ENCODE measurements at regions of chr11 and their contacts with region 1.

Region 1: GRCh38 chr11:6612213-6613041 is at the start of gene TAF10:
- DNase-seq: peak; percentile 95 to 96 (median 95)
- H3K4me3 ChIP-seq: peak within 1 kb of the TSS; percentile 69 to 87 (median 76)
- H3K4me3 Mint-ChIP-seq: peak within 1 kb of the TSS; percentile 86 to 93
- H3K27ac ChIP-seq: peak within 1 kb of the TSS; percentile 93 to 99
- H3K27ac Mint-ChIP-seq: peak within 1 kb of the TSS in 6 of 7 donors; percentile 90 to 96 (median 95)
- H3K4me1 ChIP-seq: peaks cover 45 to 56% of the 10 kb centered on the region in 2 donors
- H3K4me1 Mint-ChIP-seq: peaks cover 33% of the 10 kb centered on the region
- H3K27me3 ChIP-seq: no peaks in the 10 kb centered on the region
- H3K27me3 Mint-ChIP-seq: no peaks in the 10 kb centered on the region
- CTCF ChIP-seq: peak; percentile 46
- polyA plus RNA-seq, gene TAF10: 137 to 233 (median 232) TPM

Region 2: DNA sequence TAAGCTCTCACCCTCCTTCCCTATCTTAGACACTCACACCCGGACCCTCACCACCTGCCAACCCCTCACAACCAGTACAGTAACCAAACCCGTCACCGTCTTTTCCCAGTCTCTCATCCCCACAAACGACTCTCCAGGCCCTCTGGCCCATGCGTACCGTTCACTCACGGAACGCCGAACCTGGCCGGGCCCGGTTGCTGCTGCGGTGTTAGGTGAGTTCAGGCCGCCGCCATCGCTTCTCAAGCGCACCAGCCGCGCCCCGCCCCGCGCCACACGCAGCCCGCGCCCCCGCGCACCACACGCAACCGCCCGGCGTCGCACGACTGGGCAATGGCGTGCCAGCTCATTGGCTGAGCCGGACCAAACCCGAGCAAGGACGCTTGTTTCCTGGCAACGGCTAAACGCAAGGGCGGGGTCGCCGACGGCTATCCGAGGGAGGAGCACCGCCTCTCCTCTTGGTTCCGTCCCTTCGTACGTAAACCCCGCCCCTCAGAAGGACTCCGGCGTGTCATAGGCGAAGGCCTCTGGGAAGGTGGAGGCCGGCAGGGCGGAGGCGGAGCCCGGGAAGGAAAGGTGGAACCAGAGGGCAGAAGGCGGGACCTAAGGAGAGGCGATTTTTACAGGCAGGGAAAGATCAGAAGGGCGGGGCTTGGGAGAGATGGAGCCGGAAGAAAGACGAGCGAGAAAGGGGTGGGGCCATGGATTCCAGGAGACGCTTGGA is 377.9 kb before region 1 on chr11 and contains the start of gene FHIP1B:
- intact Hi-C with region 1: loop called (anchors 5 to 10 kb)
- DNase-seq: peak; percentile 99 to 100 (median 100)
- H3K4me3 ChIP-seq: peak within 1 kb of the TSS; percentile 81 to 94 (median 87)
- H3K4me3 Mint-ChIP-seq: peak within 1 kb of the TSS; percentile 97 to 100
- H3K27ac ChIP-seq: peak within 1 kb of the TSS; percentile 84 to 97
- H3K27ac Mint-ChIP-seq: peak within 1 kb of the TSS; percentile 98 to 100 (median 98)
- H3K4me1 ChIP-seq: peaks cover 49 to 72% of the 10 kb centered on the region in 2 donors
- H3K4me1 Mint-ChIP-seq: peaks cover 48% of the 10 kb centered on the region
- H3K27me3 ChIP-seq: no peaks in the 10 kb centered on the region
- H3K27me3 Mint-ChIP-seq: peaks cover 0 to 1% (median 0%) of the 10 kb centered on the region in 3 donors
- CTCF ChIP-seq: no peak
- polyA plus RNA-seq, gene FHIP1B: 14.2 to 64.1 (median 18.9) TPM

Region 3: DNA sequence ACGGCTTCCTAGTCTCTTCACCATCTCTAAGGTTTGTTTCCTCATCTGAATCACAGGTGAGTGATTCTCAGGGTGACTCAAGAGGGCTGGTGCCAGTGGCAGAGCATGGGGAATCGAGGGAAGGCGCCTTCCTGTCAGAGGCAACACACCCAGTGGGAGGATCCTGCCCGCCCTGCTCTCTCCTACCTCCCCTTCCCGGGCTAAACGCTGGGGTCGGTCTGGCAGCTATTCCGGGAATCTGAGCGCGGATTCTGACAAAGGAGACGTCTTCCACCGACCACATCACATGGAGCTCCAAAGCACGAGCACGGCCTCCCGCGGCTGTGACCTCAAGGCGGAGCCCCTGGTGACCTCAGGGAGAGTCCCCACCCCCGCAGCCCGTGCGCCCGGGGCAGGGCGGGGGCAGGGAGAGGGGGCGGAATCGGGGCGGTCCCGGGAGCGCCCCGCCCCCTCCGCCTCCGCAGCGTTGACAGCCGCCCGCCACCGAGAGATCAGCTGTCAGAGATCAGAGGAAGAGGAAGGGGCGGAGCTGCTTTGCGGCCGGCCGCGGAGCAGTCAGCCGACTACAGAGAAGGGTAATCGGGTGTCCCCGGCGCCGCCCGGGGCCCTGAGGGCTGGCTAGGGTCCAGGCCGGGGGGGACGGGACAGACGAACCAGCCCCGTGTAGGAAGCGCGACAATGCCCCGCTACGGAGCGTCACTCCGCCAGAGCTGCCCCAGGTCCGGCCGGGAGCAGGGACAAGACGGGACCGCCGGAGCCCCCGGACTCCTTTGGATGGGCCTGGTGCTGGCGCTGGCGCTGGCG is 222.3 kb before region 1 on chr11 and contains the start of gene SMPD1:
- intact Hi-C with region 1: loop called in 1 of 2 experiments (anchors 5 kb)
- DNase-seq: peak; percentile 92 to 94 (median 93)
- H3K4me3 ChIP-seq: peak within 1 kb of the TSS; percentile 62 to 91 (median 70)
- H3K4me3 Mint-ChIP-seq: peak within 1 kb of the TSS; percentile 87 to 97
- H3K27ac ChIP-seq: peak within 1 kb of the TSS; percentile 76 to 93
- H3K27ac Mint-ChIP-seq: peak within 1 kb of the TSS; percentile 94 to 99 (median 97)
- H3K4me1 ChIP-seq: peaks cover 15 to 19% of the 10 kb centered on the region in 2 donors
- H3K4me1 Mint-ChIP-seq: peaks cover 34% of the 10 kb centered on the region
- H3K27me3 ChIP-seq: no peaks in the 10 kb centered on the region
- H3K27me3 Mint-ChIP-seq: peaks cover 0 to 2% (median 0%) of the 10 kb centered on the region in 3 donors
- CTCF ChIP-seq: no peak
- polyA plus RNA-seq, gene SMPD1: 4.2 to 22.6 (median 4.9) TPM

Region 4: GRCh38 chr11:6481012-6481923 is 131.2 kb before region 1 on chr11 and contains the starts of genes ARFIP2 and TIMM10B:
- intact Hi-C with region 1: loop called (anchors 5 to 10 kb)
- DNase-seq: peak; percentile 99 to 100 (median 99)
- H3K4me3 ChIP-seq: peak within 1 kb of the TSS; percentile 56 to 78 (median 64)
- H3K4me3 Mint-ChIP-seq: peak within 1 kb of the TSS; percentile 82 to 91
- H3K27ac ChIP-seq: peak within 1 kb of the TSS; percentile 97 to 98
- H3K27ac Mint-ChIP-seq: peak within 1 kb of the TSS; percentile 96 to 99 (median 98)
- H3K4me1 ChIP-seq: peaks cover 22 to 25% of the 10 kb centered on the region in 2 donors
- H3K4me1 Mint-ChIP-seq: peaks cover 31% of the 10 kb centered on the region
- H3K27me3 ChIP-seq: no peaks in the 10 kb centered on the region
- H3K27me3 Mint-ChIP-seq: peaks cover 0 to 2% (median 0%) of the 10 kb centered on the region in 3 donors
- CTCF ChIP-seq: no peak
- polyA plus RNA-seq, gene ARFIP2: 21.6 to 43.8 (median 27.2) TPM
- polyA plus RNA-seq, gene TIMM10B: 20.0 to 34.9 (median 22.1) TPM

Region 5: DNA sequence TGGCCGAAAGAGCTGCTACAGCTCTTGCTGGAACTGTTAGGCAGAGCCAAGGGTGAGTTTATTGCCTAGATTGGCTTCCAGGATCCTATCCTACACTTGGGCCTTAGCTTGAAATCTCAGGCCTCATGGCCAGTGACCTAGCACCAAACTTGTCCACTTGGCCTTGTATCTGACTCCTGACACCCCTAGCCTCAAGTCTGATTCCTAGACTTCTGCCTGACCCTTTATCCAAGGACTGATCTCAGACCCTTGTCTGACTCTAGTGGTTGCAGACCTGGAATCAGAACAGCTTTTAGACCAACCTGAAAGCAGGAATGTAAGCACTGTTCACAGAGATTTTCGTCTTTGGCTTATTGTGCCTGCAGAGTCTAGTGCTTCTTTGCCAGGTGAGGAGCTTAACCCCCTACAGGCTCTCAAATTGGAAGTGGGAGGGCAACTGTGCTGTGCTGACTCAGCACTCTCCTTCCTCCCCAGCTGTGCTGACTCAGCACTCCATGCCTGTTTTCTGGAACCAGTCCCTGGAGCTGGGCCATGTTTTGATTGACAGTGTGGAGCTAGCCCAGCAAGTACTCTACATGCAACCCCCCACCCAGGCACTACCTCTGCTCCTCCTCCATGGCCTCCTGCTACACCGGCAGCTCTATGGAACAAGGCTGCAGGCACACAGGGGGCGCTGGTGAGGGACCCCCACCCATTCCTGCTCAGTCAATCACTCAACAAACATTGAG is 44.1 kb before region 1 on chr11:
- intact Hi-C with region 1: no loop called
- DNase-seq: no peak
- H3K4me3 ChIP-seq: no peak overlapping the region
- H3K4me3 Mint-ChIP-seq: no peak overlapping the region
- H3K27ac ChIP-seq: no peak overlapping the region
- H3K27ac Mint-ChIP-seq: peak overlapping the region in 4 of 7 donors; percentile 1 to 73 (median 35)
- H3K4me1 ChIP-seq: no peaks in the 10 kb centered on the region
- H3K4me1 Mint-ChIP-seq: peaks cover 8% of the 10 kb centered on the region
- H3K27me3 ChIP-seq: peaks cover 0 to 4% of the 10 kb centered on the region in 2 donors
- H3K27me3 Mint-ChIP-seq: peaks cover 0 to 13% (median 10%) of the 10 kb centered on the region in 3 donors
- CTCF ChIP-seq: no peak

Region 6: DNA sequence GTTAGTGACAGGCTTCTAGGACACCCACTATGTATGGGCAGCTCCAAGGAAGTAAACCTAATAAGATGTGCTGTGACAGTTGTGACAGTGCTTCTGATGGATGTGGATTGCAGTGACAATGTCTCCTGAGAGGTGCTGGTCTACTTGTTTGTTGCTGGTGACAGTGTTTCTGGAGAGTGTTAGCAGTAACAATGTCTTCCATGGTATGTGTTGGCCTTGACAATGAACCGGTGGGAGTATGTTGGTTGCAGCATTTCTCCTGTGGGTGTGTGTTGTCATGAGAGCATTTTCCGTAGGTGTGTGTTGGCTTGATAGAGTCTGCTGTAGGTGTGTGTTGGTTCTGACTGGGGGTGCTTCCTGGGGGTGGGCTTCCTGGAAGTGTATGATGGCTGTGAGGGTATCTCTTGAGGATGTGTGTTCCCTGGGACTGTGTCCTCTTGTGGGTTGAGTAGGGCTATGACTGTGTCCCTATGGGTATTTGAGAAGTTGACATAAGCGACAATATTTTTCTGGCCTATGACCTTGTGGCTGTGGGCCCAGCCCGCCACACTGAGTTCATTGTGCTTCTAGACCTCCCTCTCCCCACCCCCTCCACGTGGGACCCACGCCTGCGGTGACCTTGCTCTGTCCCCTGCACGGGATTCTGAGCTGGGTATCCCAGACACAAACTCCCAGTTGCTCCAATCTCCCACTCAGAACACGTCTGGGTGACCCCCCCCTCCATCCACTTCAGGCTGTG is 42.0 kb after region 1 on chr11:
- intact Hi-C with region 1: loop called in 1 of 2 experiments (anchors 5 kb)
- DNase-seq: no peak
- H3K4me3 ChIP-seq: peak overlapping the region in 1 of 3 experiments; percentile 48
- H3K4me3 Mint-ChIP-seq: no peak overlapping the region
- H3K27ac ChIP-seq: no peak overlapping the region
- H3K27ac Mint-ChIP-seq: no peak overlapping the region
- H3K4me1 ChIP-seq: peaks cover 4 to 10% of the 10 kb centered on the region in 2 donors
- H3K4me1 Mint-ChIP-seq: peaks cover 9% of the 10 kb centered on the region
- H3K27me3 ChIP-seq: peaks cover 31% of the 10 kb centered on the region in 2 donors
- H3K27me3 Mint-ChIP-seq: peaks cover 15 to 16% (median 15%) of the 10 kb centered on the region in 3 donors
- CTCF ChIP-seq: no peak

Region 7: GRCh38 chr11:6693342-6694228 is 81.2 kb after region 1 on chr11:
- intact Hi-C with region 1: no loop called
- DNase-seq: peak; percentile 29 to 77 (median 31)
- H3K4me3 ChIP-seq: no peak overlapping the region
- H3K4me3 Mint-ChIP-seq: peak overlapping the region in 1 of 2 donors; percentile 31
- H3K27ac ChIP-seq: no peak overlapping the region
- H3K27ac Mint-ChIP-seq: peak overlapping the region in 1 of 7 donors; percentile 3
- H3K4me1 ChIP-seq: peaks cover 5 to 6% of the 10 kb centered on the region in 2 donors
- H3K4me1 Mint-ChIP-seq: peaks cover 12% of the 10 kb centered on the region
- H3K27me3 ChIP-seq: no peaks in the 10 kb centered on the region
- H3K27me3 Mint-ChIP-seq: peaks cover 1 to 2% (median 1%) of the 10 kb centered on the region in 3 donors
- CTCF ChIP-seq: no peak